Activated CD4-positive, alpha-beta memory T cell treated with anti-CD3 and anti-CD28 coated beads, Interleukin-2, amount 10 ng/mL, durations not matched to agents 7 days and 5 days (primary cell): ENCODE measurements at regions of chr10 and their contacts with region 1.

Region 1: GRCh38 chr10:24724381-24725228 is 918 bp upstream of the ARHGAP21 start:
- DNase-seq: peak; percentile 96
- H3K4me3 Mint-ChIP-seq: peak overlapping the region; percentile 92
- H3K27ac Mint-ChIP-seq: peak overlapping the region; percentile 90
- H3K4me1 Mint-ChIP-seq: peaks cover 26% of the 10 kb centered on the region
- H3K27me3 Mint-ChIP-seq: no peaks in the 10 kb centered on the region

Region 2: DNA sequence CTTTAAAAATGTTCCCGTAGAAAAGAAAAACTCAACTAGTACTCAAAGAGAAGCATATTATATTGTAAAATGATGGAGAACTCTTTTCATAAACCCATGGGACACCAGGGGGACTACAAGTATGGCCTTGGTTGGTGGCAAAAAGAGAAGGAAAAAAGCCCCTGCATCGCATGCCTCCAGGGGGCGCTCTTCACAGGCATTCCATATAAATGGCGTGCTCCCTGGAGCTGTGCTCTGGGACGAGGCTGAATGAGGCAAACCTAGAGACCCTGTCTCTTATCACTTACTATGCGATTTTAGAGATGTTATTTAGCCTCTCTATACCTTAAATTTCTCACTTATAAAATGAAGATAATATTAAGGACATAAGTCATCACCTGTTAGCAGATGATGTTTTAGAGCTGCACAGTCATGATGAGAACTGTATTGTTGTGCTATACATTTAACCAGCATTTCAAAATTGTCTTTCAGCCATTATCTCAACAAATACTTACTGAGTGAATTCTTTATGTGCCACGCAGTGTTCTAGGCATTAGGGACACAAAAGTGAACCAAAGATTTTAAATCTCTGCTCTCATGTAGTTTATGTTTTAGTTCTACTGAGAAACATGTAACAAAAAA is 106.7 kb before region 1 on chr10:
- CTCF ChIA-PET with region 1: interaction called, 3 read pairs
- POLR2A ChIA-PET with region 1: interaction called, 10 read pairs
- DNase-seq: peak; percentile 43
- H3K4me3 Mint-ChIP-seq: no peak overlapping the region
- H3K27ac Mint-ChIP-seq: no peak overlapping the region
- H3K4me1 Mint-ChIP-seq: peaks cover 13% of the 10 kb centered on the region
- H3K27me3 Mint-ChIP-seq: no peaks in the 10 kb centered on the region

Region 3: DNA sequence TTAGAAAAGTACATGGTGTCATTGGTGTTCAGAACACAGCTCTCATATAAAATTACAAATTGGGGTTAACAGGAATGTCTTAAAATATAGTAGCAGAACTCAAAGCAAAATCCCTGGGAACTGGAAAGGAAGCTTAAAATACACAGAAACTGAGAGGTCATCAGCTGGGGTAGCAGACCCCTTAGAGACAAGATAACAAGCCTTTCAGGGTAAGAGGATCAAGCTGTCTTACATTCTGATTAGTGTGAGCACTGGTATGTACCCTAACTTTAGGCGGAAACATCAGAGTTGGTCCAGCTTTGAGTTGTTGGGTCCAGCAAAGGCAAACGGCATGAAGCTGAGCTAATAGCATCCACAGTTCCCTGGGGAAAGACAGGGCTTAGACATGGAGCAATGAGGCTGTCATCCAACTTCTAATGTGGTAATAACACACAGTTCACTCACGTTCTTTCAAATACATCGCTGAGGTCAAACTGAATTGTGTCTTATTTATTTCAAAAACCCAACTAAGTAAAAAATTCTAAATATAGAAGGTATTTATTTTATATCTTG is 33.6 kb before region 1 on chr10:
- CTCF ChIA-PET with region 1: no interaction called
- POLR2A ChIA-PET with region 1: no interaction called
- DNase-seq: no peak
- H3K4me3 Mint-ChIP-seq: no peak overlapping the region
- H3K27ac Mint-ChIP-seq: no peak overlapping the region
- H3K4me1 Mint-ChIP-seq: peaks cover 5% of the 10 kb centered on the region
- H3K27me3 Mint-ChIP-seq: no peaks in the 10 kb centered on the region

Region 4: DNA sequence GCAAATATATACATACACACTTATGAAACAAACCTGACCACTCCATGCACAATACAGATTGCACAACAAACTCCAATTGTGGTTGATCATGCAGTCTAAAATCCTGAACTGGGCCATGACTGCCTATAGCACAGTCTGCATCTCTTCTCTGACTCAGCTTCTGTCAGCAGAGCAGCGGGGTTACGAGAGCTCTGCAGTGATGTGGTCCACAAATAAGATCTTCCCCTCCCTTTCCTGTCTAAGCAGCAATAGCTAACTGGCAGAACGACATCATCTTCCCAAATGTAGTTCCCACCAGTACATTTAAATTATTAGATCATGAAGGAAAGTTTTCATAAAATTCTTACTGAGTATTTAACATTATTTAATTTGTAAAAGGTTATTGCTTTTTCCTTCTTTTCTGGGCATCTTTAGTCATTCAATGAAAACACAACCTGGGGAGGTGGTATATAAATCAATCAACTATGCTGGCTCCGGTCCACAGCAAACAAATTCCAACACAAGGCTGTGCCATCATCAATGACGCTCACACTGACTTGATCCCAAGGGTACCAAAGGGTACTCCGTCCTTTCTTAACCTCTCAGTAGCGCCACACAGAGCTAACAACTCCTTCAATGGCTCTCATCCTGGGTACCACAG is 18.0 kb before region 1 on chr10:
- CTCF ChIA-PET with region 1: interaction called, 11 read pairs
- POLR2A ChIA-PET with region 1: interaction called, 7 read pairs
- DNase-seq: peak; percentile 44
- H3K4me3 Mint-ChIP-seq: no peak overlapping the region
- H3K27ac Mint-ChIP-seq: no peak overlapping the region
- H3K4me1 Mint-ChIP-seq: peaks cover 21% of the 10 kb centered on the region
- H3K27me3 Mint-ChIP-seq: no peaks in the 10 kb centered on the region

Region 5: DNA sequence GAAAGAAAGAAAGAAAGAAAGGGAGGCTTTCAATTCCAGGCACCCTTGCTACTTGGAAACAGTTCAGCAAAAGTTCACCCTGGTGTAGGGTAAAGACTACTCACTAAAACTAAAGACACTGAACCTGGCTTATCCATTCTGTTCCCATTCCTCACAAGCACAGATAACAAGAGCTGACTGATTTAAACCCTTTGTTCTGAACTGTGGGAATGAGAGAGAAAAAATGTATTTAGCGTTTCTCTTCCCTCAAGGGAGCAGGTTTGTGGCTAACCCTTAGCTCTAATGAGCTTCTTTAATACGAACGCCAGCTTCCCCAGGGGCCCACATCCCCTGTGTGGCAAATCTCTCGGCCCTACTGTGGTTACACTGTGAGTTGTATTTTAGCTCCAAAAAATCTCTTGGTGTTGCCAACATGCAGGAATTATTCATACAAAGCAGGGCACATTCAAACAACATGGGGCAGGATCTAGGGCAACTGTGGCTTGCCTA is 204.5 kb after region 1 on chr10:
- CTCF ChIA-PET with region 1: no interaction called
- POLR2A ChIA-PET with region 1: no interaction called
- DNase-seq: no peak
- H3K4me3 Mint-ChIP-seq: no peak overlapping the region
- H3K27ac Mint-ChIP-seq: no peak overlapping the region
- H3K4me1 Mint-ChIP-seq: peaks cover 2% of the 10 kb centered on the region
- H3K27me3 Mint-ChIP-seq: no peaks in the 10 kb centered on the region

Region 6: DNA sequence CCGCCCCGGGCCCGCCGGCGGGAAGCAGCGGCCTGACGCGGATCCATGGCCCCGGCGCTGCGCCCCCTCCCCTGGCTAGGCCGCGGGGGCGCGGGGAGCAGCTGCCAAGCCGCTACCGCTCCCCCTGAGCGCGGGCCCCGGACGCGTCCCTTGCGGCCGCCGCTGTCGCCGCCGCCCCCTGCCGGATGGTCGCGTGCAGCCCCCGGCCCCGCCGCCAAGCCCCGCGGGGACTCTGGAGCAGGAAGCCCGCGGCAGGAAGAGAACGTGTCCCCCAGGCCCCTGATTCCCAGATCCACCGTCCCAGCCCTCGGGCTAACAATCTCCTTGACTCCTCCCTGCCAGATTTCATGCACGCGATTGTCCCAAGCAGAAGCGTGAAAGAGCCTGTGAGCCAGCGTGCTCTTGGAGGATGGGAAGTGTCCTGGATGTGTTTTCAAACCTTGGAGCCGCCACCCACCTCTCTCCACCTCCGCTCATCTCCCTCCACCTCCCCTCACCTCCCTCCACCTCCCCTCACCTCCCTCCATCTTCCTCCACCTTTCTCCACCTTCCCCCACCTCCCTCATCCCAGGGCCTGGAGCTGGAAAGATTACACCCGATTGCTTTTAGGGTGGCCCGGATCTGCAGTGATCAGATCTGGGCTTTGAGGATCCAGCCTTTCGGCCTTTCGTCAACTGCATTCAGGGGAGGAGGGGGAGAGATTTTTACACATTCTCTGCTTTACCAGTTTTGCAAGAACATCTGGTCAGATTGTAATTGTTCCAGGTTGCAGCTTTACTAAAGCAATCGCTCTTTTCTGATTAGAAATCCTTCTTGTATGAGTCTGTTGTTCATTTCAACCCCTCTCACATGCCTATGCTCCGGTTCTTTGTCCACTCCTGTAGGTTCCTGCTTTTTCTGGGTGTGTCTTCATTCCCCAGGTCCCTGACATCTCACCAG is 228.4 kb after region 1 on chr10:
- CTCF ChIA-PET with region 1: interaction called, 5 read pairs
- POLR2A ChIA-PET with region 1: interaction called, 19 read pairs
- DNase-seq: peak; percentile 50
- H3K4me3 Mint-ChIP-seq: peak overlapping the region; percentile 79
- H3K27ac Mint-ChIP-seq: peak overlapping the region; percentile 70
- H3K4me1 Mint-ChIP-seq: peaks cover 32% of the 10 kb centered on the region
- H3K27me3 Mint-ChIP-seq: no peaks in the 10 kb centered on the region